Heart left ventricle (tissue), 16 donors: ENCODE measurements at regions of chr18 and their contacts with region 1.

Region 1: DNA sequence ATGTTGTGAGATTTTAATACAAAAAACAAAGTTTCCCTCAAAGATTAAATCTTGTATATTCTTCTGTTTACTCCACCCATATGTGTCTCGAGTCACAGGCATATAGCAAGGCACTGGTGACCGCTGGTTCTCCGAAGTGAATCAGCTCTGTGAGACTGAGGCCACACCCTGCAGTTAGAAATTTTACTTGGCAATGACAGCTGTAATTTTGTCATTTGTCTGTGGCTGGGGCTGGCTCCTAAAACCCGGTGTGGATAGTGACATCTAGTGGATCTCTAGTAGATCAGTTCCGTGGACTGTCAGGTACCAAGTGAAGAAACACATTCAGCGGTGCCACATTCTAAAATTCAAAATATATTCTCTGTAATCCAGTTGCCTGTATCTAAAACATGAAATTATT is 278.0 kb downstream of the NEDD4L start:
- DNase-seq: peak in 4 of 5 donors; percentile 66 to 79 (median 74)
- ATAC-seq: peak; percentile 70 to 95 (median 94)
- H3K4me3 ChIP-seq: peak overlapping the region in 5 of 12 donors; percentile 3 to 35 (median 19)
- H3K27ac ChIP-seq: peak overlapping the region in 8 of 12 donors; percentile 9 to 69 (median 44)
- H3K4me1 ChIP-seq: peaks cover 0 to 30% (median 13%) of the 10 kb centered on the region in 12 donors
- H3K27me3 ChIP-seq: no peaks in the 10 kb centered on the region
- CTCF ChIP-seq: peak in 11 of 12 donors; percentile 50 to 83 (median 65)
- POLR2A ChIP-seq: no peak

Region 2: DNA sequence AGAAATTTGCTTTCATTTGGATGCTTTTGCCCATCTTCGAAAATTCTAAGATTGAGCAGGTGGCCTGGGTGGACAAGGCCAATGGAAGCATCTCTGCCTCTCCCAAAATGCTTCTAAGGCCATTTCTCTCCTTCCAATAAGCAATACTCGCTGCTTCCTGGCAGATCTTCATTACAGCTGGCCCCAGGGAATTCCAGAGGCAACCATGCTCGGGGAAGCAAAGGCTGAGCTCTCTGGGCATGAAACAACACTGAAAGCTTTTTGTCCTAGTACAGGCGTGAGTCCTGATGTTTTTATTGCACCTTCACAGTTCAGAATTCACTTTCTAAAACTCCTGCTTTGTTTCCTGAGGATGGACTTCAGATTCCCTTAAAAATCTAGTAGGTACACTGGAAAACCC is 289.8 kb before region 1 on chr18:
- intact Hi-C with region 1: loop called in 1 of 10 experiments (anchors 5 kb)
- DNase-seq: no peak
- ATAC-seq: no peak
- H3K4me3 ChIP-seq: no peak overlapping the region
- H3K27ac ChIP-seq: no peak overlapping the region
- H3K4me1 ChIP-seq: no peaks in the 10 kb centered on the region
- H3K27me3 ChIP-seq: peaks cover 0 to 18% (median 0%) of the 10 kb centered on the region in 9 donors
- CTCF ChIP-seq: no peak
- POLR2A ChIP-seq: no peak

Region 3: DNA sequence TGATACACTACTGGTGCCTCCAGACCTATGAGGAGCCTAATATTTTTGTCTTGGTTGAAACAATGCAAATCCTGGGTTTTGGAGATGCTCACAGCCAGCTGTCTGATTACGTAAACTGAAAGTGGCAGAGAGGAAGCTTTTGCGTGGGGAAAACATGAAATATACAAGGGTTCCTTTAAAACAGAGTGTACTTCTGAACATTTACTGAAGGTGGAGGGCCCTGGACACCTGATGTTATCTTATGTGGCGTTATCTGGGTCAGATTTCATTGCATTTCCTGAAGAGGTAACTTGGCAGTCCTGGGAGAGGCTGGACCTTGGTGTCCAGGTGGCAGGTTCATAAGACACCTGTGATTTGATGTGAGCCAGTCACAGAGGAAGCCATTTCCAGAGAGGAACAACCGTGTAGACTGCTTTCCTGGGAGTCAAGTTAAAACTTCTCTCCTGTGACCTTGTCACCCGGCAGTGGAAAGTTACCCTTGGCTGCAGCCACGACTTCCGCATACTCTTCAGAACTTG is 173.0 kb before region 1 on chr18:
- intact Hi-C with region 1: loop called in 1 of 10 experiments (anchors 10 kb)
- DNase-seq: no peak
- ATAC-seq: no peak
- H3K4me3 ChIP-seq: no peak overlapping the region
- H3K27ac ChIP-seq: no peak overlapping the region
- H3K4me1 ChIP-seq: no peaks in the 10 kb centered on the region
- H3K27me3 ChIP-seq: no peaks in the 10 kb centered on the region
- CTCF ChIP-seq: no peak
- POLR2A ChIP-seq: no peak

Region 4: DNA sequence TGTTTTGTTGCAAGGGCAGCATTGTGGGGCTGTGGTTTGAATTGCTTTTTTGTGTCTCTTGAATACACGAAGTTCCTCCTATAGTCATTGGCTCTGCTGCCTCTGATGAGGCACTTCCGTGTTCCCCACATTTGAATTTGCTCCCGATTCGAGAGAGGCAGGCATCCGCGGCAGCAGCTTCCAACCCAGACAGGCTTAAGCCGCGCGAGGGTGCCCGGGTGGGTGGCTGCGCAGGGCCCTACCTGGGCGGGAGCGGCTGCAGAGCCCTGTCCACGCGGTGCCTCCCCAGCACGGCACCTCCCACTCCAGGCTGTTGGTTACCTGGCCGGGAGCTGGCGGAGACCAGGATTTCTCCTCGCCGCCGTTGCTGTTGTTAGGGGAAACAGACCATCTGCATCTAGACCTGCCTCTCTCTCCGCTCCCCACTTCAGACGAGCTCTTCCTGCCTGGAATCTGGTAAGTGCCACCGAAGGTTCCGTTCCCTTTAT is 126.7 kb before region 1 on chr18:
- intact Hi-C with region 1: loop called in 7 of 10 experiments (anchors 5 to 10 kb)
- DNase-seq: peak in 1 of 5 donors; percentile 57
- ATAC-seq: peak in 3 of 4 donors; percentile 18 to 60 (median 59)
- H3K4me3 ChIP-seq: peak overlapping the region in 11 of 12 donors; percentile 17 to 64 (median 49)
- H3K27ac ChIP-seq: peak overlapping the region in 3 of 12 donors; percentile 30 to 78 (median 31)
- H3K4me1 ChIP-seq: peaks cover 0 to 26% (median 4%) of the 10 kb centered on the region in 12 donors
- H3K27me3 ChIP-seq: peaks cover 0 to 5% (median 0%) of the 10 kb centered on the region in 9 donors
- CTCF ChIP-seq: no peak
- POLR2A ChIP-seq: no peak

Region 5: DNA sequence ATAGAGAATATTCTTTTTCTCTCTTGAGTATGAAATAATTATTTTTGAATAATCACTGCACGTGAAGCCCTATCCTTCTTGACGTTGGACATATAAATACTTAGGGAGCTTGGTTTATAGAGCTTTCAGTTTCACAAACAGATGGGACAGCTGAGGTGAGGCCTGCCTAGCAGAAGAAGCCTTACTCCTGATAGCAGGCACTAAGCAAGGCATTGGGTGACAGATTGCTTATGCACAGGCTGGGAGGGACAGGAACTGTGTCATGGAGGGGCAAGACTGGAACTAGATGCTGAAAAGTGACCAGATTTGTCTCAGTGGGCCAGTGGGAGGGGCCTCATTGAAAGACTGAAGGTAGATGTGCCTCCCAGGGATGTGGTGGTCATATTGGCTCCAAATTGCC is 57.1 kb before region 1 on chr18:
- intact Hi-C with region 1: no loop called
- DNase-seq: no peak
- ATAC-seq: peak in 1 of 4 donors; percentile 40
- H3K4me3 ChIP-seq: no peak overlapping the region
- H3K27ac ChIP-seq: peak overlapping the region in 7 of 12 donors; percentile 2 to 74 (median 64)
- H3K4me1 ChIP-seq: peaks cover 0 to 48% (median 14%) of the 10 kb centered on the region in 12 donors
- H3K27me3 ChIP-seq: no peaks in the 10 kb centered on the region
- CTCF ChIP-seq: no peak
- POLR2A ChIP-seq: no peak

Region 6: DNA sequence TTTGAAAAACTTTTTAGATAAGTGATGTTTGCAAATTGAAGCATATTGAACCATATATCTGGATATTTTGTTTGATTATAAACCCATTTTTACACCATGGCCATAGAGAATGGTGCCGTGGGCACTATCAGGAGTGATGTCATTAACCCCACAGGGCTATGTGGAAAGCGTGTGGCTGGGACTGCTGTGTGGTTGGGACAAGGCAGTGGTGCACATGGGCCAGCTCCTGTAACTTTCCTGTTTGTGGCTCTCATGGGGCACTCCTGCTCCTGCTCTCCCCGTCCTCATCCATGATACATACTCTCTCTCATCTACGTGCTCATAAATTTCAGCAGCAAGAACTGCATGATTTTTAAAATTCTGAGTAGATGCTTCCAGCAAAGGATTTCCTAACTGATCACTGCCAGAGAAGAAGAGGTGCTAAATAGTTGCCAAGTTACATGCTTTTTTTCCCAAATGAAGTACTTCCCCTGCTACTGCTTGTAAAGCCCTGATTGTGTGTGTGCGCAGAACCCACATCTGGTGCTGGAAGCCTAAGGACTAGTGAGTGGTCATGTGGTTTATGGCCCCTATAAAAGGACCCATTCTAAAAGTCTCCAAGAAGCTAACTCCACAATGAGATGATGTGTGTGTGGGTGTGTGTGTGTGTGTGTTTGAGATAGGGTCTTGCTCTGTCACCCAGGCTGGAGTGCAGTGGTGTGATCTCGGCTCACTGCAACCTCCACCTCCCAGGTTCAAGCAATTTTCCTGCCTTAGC is 37.1 kb before region 1 on chr18:
- intact Hi-C with region 1: loop called in 1 of 10 experiments (anchors 2 kb)
- DNase-seq: no peak
- ATAC-seq: peak in 2 of 4 donors; percentile 13 to 34
- H3K4me3 ChIP-seq: no peak overlapping the region
- H3K27ac ChIP-seq: peak overlapping the region in 7 of 12 donors; percentile 11 to 60 (median 16)
- H3K4me1 ChIP-seq: peaks cover 0 to 64% (median 20%) of the 10 kb centered on the region in 12 donors
- H3K27me3 ChIP-seq: no peaks in the 10 kb centered on the region
- CTCF ChIP-seq: no peak
- POLR2A ChIP-seq: no peak

Region 7: GRCh38 chr18:58303363-58303762 is 18.6 kb before region 1 on chr18:
- intact Hi-C with region 1: no loop called
- DNase-seq: no peak
- ATAC-seq: no peak
- H3K4me3 ChIP-seq: no peak overlapping the region
- H3K27ac ChIP-seq: no peak overlapping the region
- H3K4me1 ChIP-seq: peaks cover 0 to 64% (median 13%) of the 10 kb centered on the region in 12 donors
- H3K27me3 ChIP-seq: no peaks in the 10 kb centered on the region
- CTCF ChIP-seq: no peak
- POLR2A ChIP-seq: no peak